Activated T-helper 1 cell treated with anti-CD3 and anti-CD28 coated beads, Interleukin-12 subunit alpha, Interleukin-12 subunit beta, Interleukin-2, Interleukin-4 antibody, amounts not matched to agents 30 ng/mL and 10 ng/mL and 1 ng/mL, durations not matched to agents 14 hours and 24 hours and 36 hours (primary cell): ENCODE measurements at regions of chr1 and their contacts with region 1.

Region 1: GRCh38 chr1:58768971-58769808 is 14.7 kb downstream of the JUN start:
- DNase-seq: no peak
- H3K4me3 Mint-ChIP-seq: no peak overlapping the region
- H3K27ac Mint-ChIP-seq: no peak overlapping the region
- H3K4me1 Mint-ChIP-seq: peaks cover 15% of the 10 kb centered on the region
- H3K27me3 Mint-ChIP-seq: peaks cover 4% of the 10 kb centered on the region

Region 2: DNA sequence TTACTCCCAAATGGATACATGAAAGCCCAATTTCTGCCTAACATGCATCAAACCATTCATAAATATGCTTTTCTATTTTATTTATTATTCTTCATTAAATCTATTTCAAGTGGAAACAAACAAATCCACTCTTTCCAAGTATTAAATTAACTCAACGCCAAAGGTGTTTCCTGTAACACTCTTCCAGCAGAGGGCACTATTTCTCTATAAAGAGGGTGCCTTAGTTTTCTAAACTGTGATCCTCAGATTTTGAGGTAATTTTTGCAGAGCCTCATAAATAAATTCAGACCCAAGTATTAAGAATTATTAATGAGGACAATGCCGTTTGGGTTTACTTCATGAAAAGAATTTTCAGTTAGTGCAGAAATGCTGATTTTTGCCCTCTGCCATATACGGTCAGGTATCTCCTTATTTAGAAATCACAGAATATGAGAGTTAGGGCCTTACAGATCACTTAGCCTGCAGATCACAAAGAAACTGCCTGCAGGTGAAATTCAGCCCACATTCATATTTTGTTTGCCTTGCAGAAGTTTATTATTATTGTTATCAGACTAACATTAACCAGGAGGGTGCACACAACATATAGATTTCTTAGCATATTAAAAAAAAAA is 29.2 kb before region 1 on chr1:
- intact Hi-C with region 1: loop called (anchors 1 kb)
- DNase-seq: no peak
- H3K4me3 Mint-ChIP-seq: no peak overlapping the region
- H3K27ac Mint-ChIP-seq: no peak overlapping the region
- H3K4me1 Mint-ChIP-seq: peaks cover 18% of the 10 kb centered on the region
- H3K27me3 Mint-ChIP-seq: peaks cover 7% of the 10 kb centered on the region

Region 3: GRCh38 chr1:58755468-58755872 is 13.7 kb before region 1 on chr1:
- intact Hi-C with region 1: loop called (anchors 1 kb)
- DNase-seq: peak; percentile 48
- H3K4me3 Mint-ChIP-seq: peak overlapping the region; percentile 59
- H3K27ac Mint-ChIP-seq: peak overlapping the region; percentile 88
- H3K4me1 Mint-ChIP-seq: peaks cover 61% of the 10 kb centered on the region
- H3K27me3 Mint-ChIP-seq: no peaks in the 10 kb centered on the region